ENCODE measurements at regions of chr3 and their contacts with region 1.

Region 1: DNA sequence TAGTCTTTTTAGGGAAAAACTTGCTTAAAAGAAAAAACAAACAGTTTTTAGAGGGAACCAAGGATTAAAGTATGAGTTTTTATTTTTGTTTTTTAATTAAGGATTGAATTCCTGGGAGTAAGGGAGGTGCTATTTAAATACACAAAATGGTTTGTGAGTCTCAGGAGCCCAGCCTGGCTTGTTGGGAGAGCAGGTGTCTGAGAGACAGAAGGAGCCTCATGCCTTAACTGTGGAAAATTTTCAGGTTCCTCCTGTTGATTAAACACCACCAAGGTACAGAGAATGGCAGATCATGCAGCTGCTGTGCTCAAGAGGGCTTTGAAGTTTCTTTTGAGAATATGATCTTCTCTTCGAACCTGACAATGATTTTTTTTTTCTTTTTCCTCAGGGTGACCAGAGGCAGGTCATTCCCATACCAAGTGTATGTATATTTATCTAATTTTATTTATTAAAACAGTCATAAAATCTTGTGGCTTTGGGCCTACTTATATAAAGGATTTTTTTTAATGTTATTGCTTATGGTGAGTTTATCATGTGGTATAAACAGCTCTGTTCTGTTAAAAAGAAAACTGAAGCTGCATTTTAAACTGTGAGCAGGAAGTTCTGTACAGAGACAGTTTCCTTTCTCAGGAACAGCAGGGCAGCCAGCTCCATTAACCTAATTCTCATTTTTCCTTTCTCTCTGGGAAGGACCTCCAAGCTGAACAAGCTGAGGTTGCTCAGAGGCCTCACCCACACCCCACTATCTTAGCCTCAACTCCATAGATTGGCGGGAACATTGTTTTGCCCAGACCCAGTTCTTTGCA is 33.7 kb upstream of the VILL start:
- DNase-seq: no peak
- H3K4me3 ChIP-seq: no peak overlapping the region
- H3K27ac ChIP-seq: peak overlapping the region; percentile 62 to 71
- H3K4me1 ChIP-seq: peaks cover 0 to 23% of the 10 kb centered on the region in 2 donors
- H3K27me3 ChIP-seq: no peaks in the 10 kb centered on the region
- CTCF ChIP-seq: no peak

Region 2: GRCh38 chr3:37907906-37908305 is 49.0 kb before region 1 on chr3:
- intact Hi-C with region 1: loop called (anchors 5 kb)
- DNase-seq: no peak
- H3K4me3 ChIP-seq: no peak overlapping the region
- H3K27ac ChIP-seq: no peak overlapping the region
- H3K4me1 ChIP-seq: peaks cover 9 to 31% of the 10 kb centered on the region in 2 donors
- H3K27me3 ChIP-seq: no peaks in the 10 kb centered on the region
- CTCF ChIP-seq: no peak